ENCODE measurements at regions of chr2 and their contacts with region 1.

Region 1: GRCh38 chr2:150487537-150488429 is at the start of gene RND3:
- DNase-seq: peak; percentile 97 to 99
- H3K4me3 ChIP-seq: peak within 1 kb of the TSS; percentile 82 to 92
- H3K27ac ChIP-seq: peak within 1 kb of the TSS; percentile 85
- H3K4me1 ChIP-seq: peaks cover 22% of the 10 kb centered on the region
- H3K27me3 ChIP-seq: no peaks in the 10 kb centered on the region
- CTCF ChIP-seq: peak; percentile 60 to 90 (median 78)
- POLR2A ChIP-seq: peak in 1 of 2 donors; percentile 96
- total RNA-seq, gene RND3: 62.1 TPM

Region 2: DNA sequence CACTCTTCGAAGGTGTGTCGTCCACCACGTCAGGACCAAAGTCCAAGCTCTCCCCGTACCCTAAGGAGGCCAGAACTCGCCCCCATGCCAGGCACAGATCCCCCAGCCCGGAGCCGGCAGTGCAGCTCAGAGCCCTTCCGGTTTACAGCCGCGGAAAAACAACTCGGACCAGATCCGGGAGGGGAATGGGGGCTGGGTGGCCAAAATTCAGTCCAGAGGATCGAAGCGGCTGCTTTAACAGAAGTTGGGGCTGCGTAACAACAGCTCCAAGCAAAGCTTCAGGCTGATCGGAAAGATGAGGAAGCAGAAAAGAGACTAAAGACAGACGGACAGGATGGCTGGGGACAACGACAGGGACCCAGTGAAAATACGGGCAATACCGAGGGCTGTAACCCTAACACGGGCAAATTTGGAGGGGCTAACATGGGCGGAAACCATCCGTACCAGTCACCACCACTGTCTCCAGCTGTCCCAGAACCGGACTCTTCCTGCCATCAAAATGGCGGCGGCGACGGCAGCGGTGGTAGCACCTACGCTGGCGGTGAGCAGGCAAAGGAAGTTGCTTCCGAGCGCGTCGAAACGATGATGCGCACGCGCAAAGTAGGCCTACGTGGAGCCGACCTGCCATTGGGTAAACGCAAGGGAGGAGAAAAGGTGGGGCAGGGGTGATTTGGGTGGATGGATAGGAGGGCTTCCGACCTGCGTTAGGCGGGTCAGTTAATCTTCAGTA is 900.4 kb before region 1 on chr2 and contains the start of gene MMADHC:
- intact Hi-C with region 1: loop called (anchors 5 kb)
- DNase-seq: peak in 1 of 2 donors; percentile 97
- H3K4me3 ChIP-seq: peak within 1 kb of the TSS; percentile 84 to 85
- H3K27ac ChIP-seq: peak within 1 kb of the TSS; percentile 93
- H3K4me1 ChIP-seq: peaks cover 40% of the 10 kb centered on the region
- H3K27me3 ChIP-seq: no peaks in the 10 kb centered on the region
- CTCF ChIP-seq: no peak
- POLR2A ChIP-seq: peak in 1 of 2 donors; percentile 75
- total RNA-seq, gene MMADHC: 48.1 TPM

Region 3: GRCh38 chr2:150280231-150280630 is 207.6 kb before region 1 on chr2:
- intact Hi-C with region 1: loop called (anchors 5 kb)
- DNase-seq: no peak
- H3K4me3 ChIP-seq: no peak overlapping the region
- H3K27ac ChIP-seq: peak overlapping the region; percentile 50
- H3K4me1 ChIP-seq: peaks cover 26% of the 10 kb centered on the region
- H3K27me3 ChIP-seq: no peaks in the 10 kb centered on the region
- CTCF ChIP-seq: no peak
- POLR2A ChIP-seq: no peak